Activated T-helper 1 cell treated with anti-CD3 and anti-CD28 coated beads, Interleukin-12 subunit alpha, Interleukin-12 subunit beta, Interleukin-2, Interleukin-4 antibody, amounts not matched to agents 30 ng/mL and 10 ng/mL and 1 ng/mL, durations not matched to agents 14 hours and 24 hours and 36 hours (primary cell): ENCODE measurements at regions of chr11 and their contacts with region 1.

Region 1: GRCh38 chr11:102317099-102317767 is at the start of gene BIRC3:
- DNase-seq: peak; percentile 93
- H3K4me3 Mint-ChIP-seq: peak within 1 kb of the TSS; percentile 97
- H3K27ac Mint-ChIP-seq: peak within 1 kb of the TSS; percentile 95
- H3K4me1 Mint-ChIP-seq: peaks cover 70% of the 10 kb centered on the region
- H3K27me3 Mint-ChIP-seq: no peaks in the 10 kb centered on the region
- total RNA-seq, gene BIRC3: 101 and 108 TPM in 2 replicates

Region 2: DNA sequence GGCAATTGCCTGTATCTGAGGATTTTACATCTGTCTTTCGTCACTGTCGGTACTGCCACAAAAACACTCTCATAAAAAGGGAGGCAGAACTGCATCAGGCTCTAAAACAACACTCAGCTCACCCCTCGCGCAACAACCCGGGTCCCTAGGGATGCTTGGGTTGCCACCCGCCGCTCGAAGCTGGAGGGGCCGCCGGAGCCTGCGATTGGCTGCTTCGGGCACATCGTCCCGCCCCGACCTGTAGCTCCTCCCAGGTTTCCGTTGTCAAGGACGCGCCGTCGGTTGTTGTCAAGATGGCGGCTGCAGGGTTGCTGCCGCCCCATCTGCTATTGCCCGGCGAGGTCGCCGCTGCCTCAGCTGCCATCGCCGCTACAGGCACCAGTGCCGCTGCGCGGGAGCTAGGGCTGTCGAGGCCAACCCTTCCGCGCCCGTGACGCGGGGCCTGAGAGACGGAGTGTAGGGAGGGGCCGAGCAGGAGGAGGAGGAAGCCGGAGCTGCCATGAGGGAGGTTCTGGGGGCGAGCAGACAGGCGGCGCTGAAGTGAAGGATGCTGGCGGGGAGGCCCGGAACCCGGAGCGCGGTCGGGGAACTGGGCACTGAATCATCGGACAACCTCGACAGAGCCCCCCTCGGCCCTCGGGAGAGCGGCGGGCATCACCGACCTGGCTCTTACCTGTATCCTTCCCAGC is 402.4 kb before region 1 on chr11 and contains the start of gene CEP126:
- intact Hi-C with region 1: loop called (anchors 10 kb)
- DNase-seq: peak; percentile 86
- H3K4me3 Mint-ChIP-seq: peak within 1 kb of the TSS; percentile 92
- H3K27ac Mint-ChIP-seq: peak within 1 kb of the TSS; percentile 74
- H3K4me1 Mint-ChIP-seq: peaks cover 22% of the 10 kb centered on the region
- H3K27me3 Mint-ChIP-seq: peaks cover 2% of the 10 kb centered on the region
- total RNA-seq, gene CEP126: 0.41 and 1.2 TPM in 2 replicates

Region 3: DNA sequence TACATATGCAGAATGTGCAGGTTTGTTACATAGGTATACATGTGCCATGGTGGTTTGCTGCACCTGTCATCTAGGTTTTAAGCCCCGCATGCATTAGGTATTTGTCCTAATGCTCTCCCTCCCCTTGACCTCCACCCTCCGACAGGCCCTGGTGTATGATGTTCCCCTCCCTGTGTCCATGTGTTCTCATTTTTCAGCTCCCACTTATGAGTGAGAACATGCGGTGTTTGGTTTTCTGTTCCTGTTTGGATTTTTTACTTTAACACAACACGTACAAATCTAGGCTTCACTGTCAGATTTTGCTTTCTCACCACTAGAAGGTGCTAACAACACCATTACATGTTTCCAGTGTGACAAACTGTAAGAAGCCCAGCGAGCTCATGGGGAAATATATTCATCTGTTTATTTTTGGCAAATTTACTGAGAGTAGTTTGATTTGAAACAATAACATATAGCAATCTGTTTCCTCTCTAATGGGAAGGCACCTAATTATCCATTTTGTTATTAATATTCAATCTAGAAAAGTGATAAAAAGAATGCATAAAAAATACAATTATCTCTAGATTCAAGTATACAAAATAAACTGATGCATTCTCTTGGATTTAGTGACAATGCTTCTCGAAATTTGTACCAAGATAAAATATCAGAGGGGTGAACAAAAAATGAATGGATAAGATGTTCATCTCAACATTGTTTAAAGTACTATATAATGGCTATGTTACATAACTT is 23.2 kb before region 1 on chr11:
- intact Hi-C with region 1: loop called (anchors 1 kb)
- DNase-seq: no peak
- H3K4me3 Mint-ChIP-seq: peak overlapping the region; percentile 84
- H3K27ac Mint-ChIP-seq: peak overlapping the region; percentile 90
- H3K4me1 Mint-ChIP-seq: peaks cover 41% of the 10 kb centered on the region
- H3K27me3 Mint-ChIP-seq: no peaks in the 10 kb centered on the region

Region 4: GRCh38 chr11:102346748-102347461 is 29.7 kb after region 1 on chr11 and contains the start of gene BIRC2:
- intact Hi-C with region 1: loop called (anchors 1 kb)
- DNase-seq: peak; percentile 94
- H3K4me3 Mint-ChIP-seq: peak within 1 kb of the TSS; percentile 98
- H3K27ac Mint-ChIP-seq: peak within 1 kb of the TSS; percentile 99
- H3K4me1 Mint-ChIP-seq: peaks cover 45% of the 10 kb centered on the region
- H3K27me3 Mint-ChIP-seq: no peaks in the 10 kb centered on the region
- total RNA-seq, gene BIRC2: 30.6 and 33.3 TPM in 2 replicates

Region 5: DNA sequence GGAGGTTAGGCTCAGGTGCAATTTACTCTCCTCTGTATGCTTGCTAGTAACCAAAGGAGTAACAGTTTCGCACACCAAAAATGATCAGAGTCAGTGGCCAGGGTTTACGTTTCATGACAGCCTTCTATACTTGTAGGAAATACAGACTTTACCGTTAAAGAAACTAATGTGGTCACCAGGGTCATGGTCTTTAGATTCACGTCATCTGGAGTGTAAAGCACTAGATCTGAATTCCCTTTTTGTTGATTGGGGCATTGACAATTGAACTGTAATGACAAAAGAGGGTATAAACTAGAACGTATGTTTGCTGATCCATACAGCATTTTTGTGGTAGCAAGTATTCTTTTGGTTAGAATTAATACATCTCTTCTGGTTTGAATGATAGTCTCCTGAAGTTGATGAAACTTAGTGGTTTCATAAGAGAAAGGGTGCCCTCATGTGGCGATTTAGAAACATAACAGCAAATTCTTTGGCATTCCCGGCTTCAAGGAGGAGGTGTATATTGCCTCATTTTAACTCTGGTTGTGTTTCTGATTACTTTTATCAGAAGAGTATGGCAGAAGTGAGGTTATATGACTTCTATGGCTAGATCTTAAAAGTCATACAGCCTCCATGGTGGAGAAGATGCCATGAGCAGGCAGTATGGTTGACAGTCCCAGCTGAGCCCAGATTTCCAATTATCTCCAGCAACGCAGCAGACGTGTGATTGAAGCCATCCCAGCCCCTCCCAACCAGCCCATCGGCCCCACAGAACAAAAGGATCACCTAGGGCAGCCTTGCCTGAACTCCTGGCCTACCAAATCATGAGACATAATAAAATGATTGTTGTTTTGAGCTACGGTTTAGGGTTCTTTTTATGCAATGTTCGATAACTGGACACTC is 178.2 kb after region 1 on chr11:
- intact Hi-C with region 1: loop called (anchors 1 kb)
- DNase-seq: peak; percentile 18
- H3K4me3 Mint-ChIP-seq: no peak overlapping the region
- H3K27ac Mint-ChIP-seq: no peak overlapping the region
- H3K4me1 Mint-ChIP-seq: peaks cover 30% of the 10 kb centered on the region
- H3K27me3 Mint-ChIP-seq: peaks cover 2% of the 10 kb centered on the region

Region 6: DNA sequence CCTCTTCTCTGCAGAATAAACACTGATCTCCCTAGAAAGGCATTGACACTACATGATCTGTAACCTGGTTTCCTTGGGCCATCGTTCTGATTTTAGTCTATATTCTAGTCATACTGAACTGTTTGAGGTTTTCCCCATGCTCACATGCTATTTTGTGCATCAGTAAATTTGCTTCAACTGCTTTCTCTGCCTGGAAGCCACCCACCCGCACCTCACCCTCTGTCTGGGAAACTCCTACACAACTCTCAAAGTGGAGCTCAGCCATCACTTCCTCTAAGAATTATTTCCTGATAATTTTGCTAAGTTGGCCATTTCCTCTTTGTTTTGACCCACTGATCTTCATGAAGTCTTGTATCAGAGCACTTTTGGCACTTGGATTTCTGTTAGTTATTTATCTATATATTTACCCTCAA is 271.8 kb after region 1 on chr11:
- intact Hi-C with region 1: loop called (anchors 2 kb)
- DNase-seq: no peak
- H3K4me3 Mint-ChIP-seq: no peak overlapping the region
- H3K27ac Mint-ChIP-seq: peak overlapping the region; percentile 74
- H3K4me1 Mint-ChIP-seq: peaks cover 49% of the 10 kb centered on the region
- H3K27me3 Mint-ChIP-seq: no peaks in the 10 kb centered on the region

Region 7: DNA sequence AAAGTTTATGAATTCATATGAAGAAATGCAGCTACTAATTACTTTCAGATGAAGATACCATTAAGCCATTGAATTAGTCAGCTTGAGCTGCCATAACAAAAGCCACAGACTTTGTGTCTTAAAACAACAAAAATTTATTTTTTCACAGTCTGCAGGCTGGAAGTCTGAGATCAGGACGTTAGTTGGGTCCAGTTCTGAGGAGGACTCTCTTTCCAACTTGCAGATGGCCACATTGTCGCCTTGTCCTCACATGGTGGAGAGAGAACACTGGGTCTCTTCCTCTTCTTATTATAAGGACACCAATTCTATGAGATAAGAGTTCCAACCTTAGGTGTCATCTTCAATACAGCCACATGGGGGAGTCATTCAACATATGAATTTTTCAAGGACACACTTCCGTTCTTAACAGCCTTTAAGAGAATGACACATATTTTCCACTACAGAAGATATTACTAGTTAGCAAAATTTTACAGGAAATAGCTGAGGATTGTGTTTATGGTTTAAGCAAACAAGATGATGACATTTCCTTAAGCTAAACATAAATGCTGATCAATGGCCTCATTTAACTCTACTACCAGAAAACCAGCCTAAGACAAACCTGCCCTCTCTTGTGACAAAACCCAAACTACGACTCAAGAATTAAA is 718.7 kb after region 1 on chr11:
- intact Hi-C with region 1: loop called (anchors 5 kb)
- DNase-seq: peak; percentile 47
- H3K4me3 Mint-ChIP-seq: peak overlapping the region; percentile 9
- H3K27ac Mint-ChIP-seq: peak overlapping the region; percentile 83
- H3K4me1 Mint-ChIP-seq: peaks cover 29% of the 10 kb centered on the region
- H3K27me3 Mint-ChIP-seq: no peaks in the 10 kb centered on the region